ENCODE measurements at regions of chr5 and their contacts with region 1.

Region 1: GRCh38 chr5:139422307-139422893 is 16.9 kb downstream of the DNAJC18 start:
- DNase-seq: peak in 31 of 35 experiments; percentile 11 to 86 (median 49)
- ATAC-seq: peak; percentile 92 to 98 (median 94)
- H3K4me3 ChIP-seq: no peak overlapping the region
- H3K4me3 Mint-ChIP-seq: no peak overlapping the region
- H3K27ac ChIP-seq: no peak overlapping the region
- H3K27ac Mint-ChIP-seq: peak overlapping the region in 1 of 2 donors; percentile 51
- H3K4me1 ChIP-seq: no peaks in the 10 kb centered on the region
- H3K4me1 Mint-ChIP-seq: peaks cover 4 to 7% (median 5%) of the 10 kb centered on the region in 3 donors
- H3K27me3 ChIP-seq: no peaks in the 10 kb centered on the region
- H3K27me3 Mint-ChIP-seq: no peaks in the 10 kb centered on the region

Region 2: DNA sequence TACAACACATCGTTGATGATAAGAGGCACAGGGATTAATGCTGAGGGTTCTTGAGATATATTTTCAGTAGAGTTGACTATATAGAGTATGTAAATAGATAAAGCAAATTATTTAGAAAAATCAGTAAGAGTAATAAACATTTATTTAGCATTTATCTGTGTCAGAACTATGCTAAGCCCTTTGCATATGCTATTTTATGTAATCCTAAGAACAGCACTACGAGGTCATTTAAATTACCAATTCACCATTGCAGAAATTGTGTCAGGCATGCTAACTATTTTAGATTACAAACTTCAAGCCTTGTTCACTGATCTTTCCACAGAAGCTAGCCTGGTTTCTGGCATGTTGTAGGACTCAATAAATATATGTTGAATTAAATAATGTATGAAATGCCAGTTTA is 1004.0 kb before region 1 on chr5:
- CTCF ChIA-PET with region 1: no interaction called
- POLR2A ChIA-PET with region 1: no interaction called
- DNase-seq: no peak
- ATAC-seq: no peak
- H3K4me3 ChIP-seq: no peak overlapping the region
- H3K4me3 Mint-ChIP-seq: no peak overlapping the region
- H3K27ac ChIP-seq: no peak overlapping the region
- H3K27ac Mint-ChIP-seq: no peak overlapping the region
- H3K4me1 ChIP-seq: no peaks in the 10 kb centered on the region
- H3K4me1 Mint-ChIP-seq: no peaks in the 10 kb centered on the region
- H3K27me3 ChIP-seq: no peaks in the 10 kb centered on the region
- H3K27me3 Mint-ChIP-seq: no peaks in the 10 kb centered on the region

Region 3: GRCh38 chr5:139439013-139439903 is 16.9 kb after region 1 on chr5 and contains the start of gene DNAJC18:
- CTCF ChIA-PET with region 1: interaction called in 1 of 2 experiments, 11 read pairs
- POLR2A ChIA-PET with region 1: interaction called in 1 of 2 experiments, 4 read pairs
- DNase-seq: peak; percentile 77 to 92 (median 87)
- ATAC-seq: peak; percentile 89 to 93 (median 92)
- H3K4me3 ChIP-seq: peak within 1 kb of the TSS; percentile 83 to 90
- H3K4me3 Mint-ChIP-seq: peak within 1 kb of the TSS; percentile 86 to 99 (median 98)
- H3K27ac ChIP-seq: peak within 1 kb of the TSS; percentile 99
- H3K27ac Mint-ChIP-seq: peak within 1 kb of the TSS; percentile 99 to 100
- H3K4me1 ChIP-seq: peaks cover 22 to 27% of the 10 kb centered on the region in 2 experiments
- H3K4me1 Mint-ChIP-seq: peaks cover 44 to 56% (median 46%) of the 10 kb centered on the region in 3 donors
- H3K27me3 ChIP-seq: peaks cover 0 to 2% of the 10 kb centered on the region in 2 experiments
- H3K27me3 Mint-ChIP-seq: no peaks in the 10 kb centered on the region
- total RNA-seq, gene DNAJC18: 4.7 to 7.2 (median 6.4) TPM

Region 4: GRCh38 chr5:139482050-139482889 is 59.9 kb after region 1 on chr5 and contains the start of gene STING1:
- CTCF ChIA-PET with region 1: interaction called, 3 to 13 read pairs
- POLR2A ChIA-PET with region 1: interaction called in 1 of 2 experiments, 3 read pairs
- DNase-seq: peak; percentile 32 to 82 (median 59)
- ATAC-seq: peak; percentile 72 to 89 (median 76)
- H3K4me3 ChIP-seq: peak within 1 kb of the TSS; percentile 78 to 83
- H3K4me3 Mint-ChIP-seq: peak within 1 kb of the TSS; percentile 86 to 89 (median 87)
- H3K27ac ChIP-seq: peak within 1 kb of the TSS; percentile 90
- H3K27ac Mint-ChIP-seq: peak within 1 kb of the TSS; percentile 97 to 98
- H3K4me1 ChIP-seq: peaks cover 6 to 62% of the 10 kb centered on the region in 2 experiments
- H3K4me1 Mint-ChIP-seq: peaks cover 34 to 44% (median 41%) of the 10 kb centered on the region in 3 donors
- H3K27me3 ChIP-seq: no peaks in the 10 kb centered on the region
- H3K27me3 Mint-ChIP-seq: no peaks in the 10 kb centered on the region
- total RNA-seq, gene STING1: 102 to 181 (median 138) TPM

Region 5: GRCh38 chr5:139517683-139518564 is 95.5 kb after region 1 on chr5:
- CTCF ChIA-PET with region 1: interaction called, 48 to 71 read pairs
- POLR2A ChIA-PET with region 1: no interaction called
- DNase-seq: peak; percentile 69 to 93 (median 84)
- ATAC-seq: peak; percentile 93 to 96 (median 94)
- H3K4me3 ChIP-seq: peak overlapping the region; percentile 61 to 66
- H3K4me3 Mint-ChIP-seq: peak overlapping the region; percentile 75 to 88 (median 83)
- H3K27ac ChIP-seq: peak overlapping the region; percentile 83
- H3K27ac Mint-ChIP-seq: peak overlapping the region; percentile 87 to 88
- H3K4me1 ChIP-seq: peaks cover 2 to 21% of the 10 kb centered on the region in 2 experiments
- H3K4me1 Mint-ChIP-seq: peaks cover 18 to 25% (median 24%) of the 10 kb centered on the region in 3 donors
- H3K27me3 ChIP-seq: peaks cover 0 to 5% of the 10 kb centered on the region in 2 experiments
- H3K27me3 Mint-ChIP-seq: no peaks in the 10 kb centered on the region

Region 6: GRCh38 chr5:139600336-139600949 is 178.0 kb after region 1 on chr5:
- CTCF ChIA-PET with region 1: interaction called in 1 of 2 experiments, 11 read pairs
- POLR2A ChIA-PET with region 1: no interaction called
- DNase-seq: no peak
- ATAC-seq: no peak
- H3K4me3 ChIP-seq: no peak overlapping the region
- H3K4me3 Mint-ChIP-seq: no peak overlapping the region
- H3K27ac ChIP-seq: no peak overlapping the region
- H3K27ac Mint-ChIP-seq: peak overlapping the region in 1 of 2 donors; percentile 27
- H3K4me1 ChIP-seq: peaks cover 3 to 15% of the 10 kb centered on the region in 2 experiments
- H3K4me1 Mint-ChIP-seq: peaks cover 14 to 27% (median 22%) of the 10 kb centered on the region in 3 donors
- H3K27me3 ChIP-seq: no peaks in the 10 kb centered on the region
- H3K27me3 Mint-ChIP-seq: no peaks in the 10 kb centered on the region